Cardiac septum (tissue), 1 donor: ENCODE measurements at regions of chr1 and their contacts with region 1.

Region 1: DNA sequence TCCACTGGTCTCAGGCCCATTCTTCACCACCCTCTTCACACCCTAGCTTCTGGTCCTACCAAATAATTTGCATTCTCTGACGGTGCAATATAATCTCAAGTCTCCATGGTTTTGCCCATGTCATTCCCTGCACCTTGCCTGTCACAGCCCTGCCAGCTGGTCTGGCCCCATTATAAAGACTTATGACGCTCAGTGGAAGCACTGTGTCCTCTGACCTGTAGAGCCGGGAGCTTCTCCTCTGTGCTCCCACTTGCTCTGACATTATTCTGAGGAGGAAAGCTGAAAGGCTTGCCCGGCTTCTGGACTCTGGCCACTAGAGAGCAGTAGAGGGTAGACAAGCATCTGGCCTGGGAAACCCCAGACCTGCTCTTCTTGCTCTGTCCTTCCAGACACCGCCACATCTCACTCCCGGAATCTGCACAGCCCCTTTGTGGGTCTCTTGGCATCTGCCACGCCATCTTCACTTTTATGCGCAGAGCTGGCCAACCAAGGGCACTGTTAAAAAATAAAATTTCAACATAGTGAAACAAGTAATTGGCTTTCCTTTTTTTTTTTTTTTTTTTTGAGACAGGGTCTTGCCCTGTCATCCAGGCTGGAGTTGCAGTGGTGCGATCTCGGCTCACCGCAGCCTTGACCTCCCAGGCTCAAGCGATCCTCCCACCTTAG is 44.4 kb downstream of the NENF start:
- DNase-seq: peak; percentile 84

Region 2: GRCh38 chr1:212053993-212054392 is 423.2 kb before region 1 on chr1:
- intact Hi-C with region 1: no loop called
- DNase-seq: no peak

Region 3: GRCh38 chr1:212450331-212450881 is 26.7 kb before region 1 on chr1:
- intact Hi-C with region 1: no loop called
- DNase-seq: peak; percentile 86

Region 4: DNA sequence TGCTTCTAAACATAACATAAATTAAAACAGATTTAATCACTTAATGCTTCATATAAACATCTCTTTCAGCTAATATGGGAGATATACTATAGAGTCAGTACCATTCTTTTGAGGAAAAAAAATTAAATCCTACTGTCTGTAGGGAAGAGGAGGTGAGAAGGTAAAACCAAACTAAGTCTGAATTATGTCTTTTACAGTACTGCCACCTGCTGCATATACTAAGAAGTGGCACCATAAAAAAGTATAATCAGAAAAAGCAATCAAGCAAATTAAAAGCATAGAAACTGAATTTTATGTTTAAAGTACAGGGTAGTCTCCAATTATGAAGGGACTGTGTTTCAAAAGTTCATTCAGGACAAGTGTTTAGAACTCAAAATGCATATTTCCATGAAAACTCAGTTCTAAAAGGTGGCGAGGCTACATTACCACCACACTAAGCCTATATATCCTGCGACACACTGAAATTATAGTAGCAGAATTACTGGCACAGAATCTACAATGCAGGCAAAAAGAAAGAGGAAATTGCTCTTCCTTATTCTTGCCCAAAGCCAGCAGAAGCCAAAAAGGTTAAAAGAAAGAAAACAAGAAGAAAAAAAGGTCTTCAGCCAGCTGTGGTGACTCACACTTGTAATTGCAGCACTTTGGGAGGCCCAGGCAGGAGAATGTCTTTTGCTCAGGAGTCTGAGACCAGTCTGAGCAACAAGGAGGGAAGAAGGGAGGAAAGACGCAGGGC is 305.4 kb after region 1 on chr1:
- intact Hi-C with region 1: loop called (anchors 2 kb)
- DNase-seq: no peak